IMR-90 (cell line): ENCODE measurements at regions of chr1 and their contacts with region 1.

Region 1: GRCh38 chr1:148347781-148348180 is 135.3 kb downstream of the PPIAL4G start:
- DNase-seq: no peak
- ATAC-seq: no peak
- H3K4me3 ChIP-seq: no peak overlapping the region
- H3K27ac ChIP-seq: no peak overlapping the region
- H3K4me1 ChIP-seq: no peaks in the 10 kb centered on the region; the same call in 1 of the 2 replicates
- H3K27me3 ChIP-seq: peaks cover 32% of the 10 kb centered on the region
- CTCF ChIP-seq: no peak
- POLR2A ChIP-seq: no peak
- RAD21 ChIP-seq: no peak

Region 2: GRCh38 chr1:147541672-147542568 is 805.9 kb before region 1 on chr1:
- CTCF ChIA-PET with region 1: no interaction called
- POLR2A ChIA-PET with region 1: no interaction called
- dilution Hi-C with region 1: no loop called
- in situ Hi-C with region 1: no loop called
- intact Hi-C with region 1: no loop called
- DNase-seq: peak; percentile 39
- ATAC-seq: peak; percentile 19
- H3K4me3 ChIP-seq: peak overlapping the region; percentile 78
- H3K27ac ChIP-seq: peak overlapping the region; percentile 69
- H3K4me1 ChIP-seq: peaks cover 13% of the 10 kb centered on the region
- H3K27me3 ChIP-seq: no peaks in the 10 kb centered on the region
- CTCF ChIP-seq: no peak
- POLR2A ChIP-seq: no peak
- RAD21 ChIP-seq: no peak

Region 3: DNA sequence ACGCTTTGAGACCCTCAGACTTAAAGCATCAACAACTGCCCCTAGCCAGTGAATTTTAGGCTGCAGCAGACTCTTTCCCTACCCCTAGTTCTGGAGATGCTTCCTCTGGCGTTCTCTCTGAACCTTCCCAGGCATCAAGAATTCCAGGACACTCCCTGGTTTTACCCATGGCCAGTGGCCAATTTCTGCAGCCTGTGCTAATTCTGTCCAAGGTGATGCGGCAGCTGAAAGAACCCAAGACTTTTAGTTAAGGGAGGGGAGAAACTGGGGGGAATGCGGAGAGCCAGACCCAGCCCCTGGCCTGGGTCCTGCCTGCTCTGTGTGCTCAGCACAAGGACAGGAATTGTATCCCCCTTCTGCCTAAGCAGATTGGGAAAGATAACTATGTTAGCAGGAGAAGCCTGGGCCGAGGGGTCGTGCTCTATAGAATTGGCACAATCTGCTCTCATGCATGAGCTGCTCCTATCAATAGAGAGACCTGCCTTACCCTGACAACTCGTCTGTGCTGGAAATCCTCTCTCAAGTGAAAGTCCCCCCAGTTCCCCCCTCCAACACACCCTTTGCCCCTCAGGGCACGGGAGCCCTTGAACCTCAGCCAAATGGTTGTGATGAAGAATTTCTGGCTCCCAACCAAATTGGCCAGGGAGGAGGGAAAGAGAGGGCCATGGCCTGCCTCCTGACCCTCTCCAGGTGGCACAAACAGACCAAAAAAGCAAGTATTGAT is 450.6 kb before region 1 on chr1:
- CTCF ChIA-PET with region 1: no interaction called
- POLR2A ChIA-PET with region 1: no interaction called
- dilution Hi-C with region 1: no loop called
- in situ Hi-C with region 1: no loop called
- intact Hi-C with region 1: no loop called
- DNase-seq: no peak
- ATAC-seq: no peak
- H3K4me3 ChIP-seq: no peak overlapping the region
- H3K27ac ChIP-seq: no peak overlapping the region
- H3K4me1 ChIP-seq: no peaks in the 10 kb centered on the region
- H3K27me3 ChIP-seq: peaks cover 6% of the 10 kb centered on the region
- CTCF ChIP-seq: no peak
- POLR2A ChIP-seq: no peak
- RAD21 ChIP-seq: no peak

Region 4: DNA sequence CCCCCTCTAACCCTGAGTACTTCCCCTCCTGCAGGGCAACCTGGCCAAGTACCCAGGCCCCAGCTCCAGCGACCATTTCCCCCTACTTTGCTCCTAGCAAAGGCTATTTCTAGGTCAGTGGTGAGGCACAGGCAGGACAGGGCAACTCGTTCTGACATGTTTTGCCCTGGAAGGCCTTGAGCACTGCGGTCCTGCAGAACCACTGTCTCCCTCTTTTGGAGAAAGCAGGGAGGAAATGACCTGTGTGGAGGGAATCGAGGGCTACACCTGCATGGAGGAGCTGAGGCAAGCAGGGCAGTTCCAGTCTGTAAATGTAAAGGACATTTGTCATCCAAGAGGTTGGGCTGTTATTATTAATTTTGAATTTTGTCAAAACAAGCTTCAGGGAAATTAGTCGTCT is 36.2 kb after region 1 on chr1:
- CTCF ChIA-PET with region 1: no interaction called
- POLR2A ChIA-PET with region 1: no interaction called
- dilution Hi-C with region 1: no loop called
- in situ Hi-C with region 1: no loop called
- intact Hi-C with region 1: loop called (anchors 2 kb)
- DNase-seq: no peak
- ATAC-seq: no peak
- H3K4me3 ChIP-seq: no peak overlapping the region
- H3K27ac ChIP-seq: no peak overlapping the region
- H3K4me1 ChIP-seq: no peaks in the 10 kb centered on the region
- H3K27me3 ChIP-seq: no peaks in the 10 kb centered on the region; the same call in none of the 2 replicates
- CTCF ChIP-seq: no peak
- POLR2A ChIP-seq: no peak
- RAD21 ChIP-seq: no peak